ENCODE measurements at regions of chr11 and their contacts with region 1.

Region 1: DNA sequence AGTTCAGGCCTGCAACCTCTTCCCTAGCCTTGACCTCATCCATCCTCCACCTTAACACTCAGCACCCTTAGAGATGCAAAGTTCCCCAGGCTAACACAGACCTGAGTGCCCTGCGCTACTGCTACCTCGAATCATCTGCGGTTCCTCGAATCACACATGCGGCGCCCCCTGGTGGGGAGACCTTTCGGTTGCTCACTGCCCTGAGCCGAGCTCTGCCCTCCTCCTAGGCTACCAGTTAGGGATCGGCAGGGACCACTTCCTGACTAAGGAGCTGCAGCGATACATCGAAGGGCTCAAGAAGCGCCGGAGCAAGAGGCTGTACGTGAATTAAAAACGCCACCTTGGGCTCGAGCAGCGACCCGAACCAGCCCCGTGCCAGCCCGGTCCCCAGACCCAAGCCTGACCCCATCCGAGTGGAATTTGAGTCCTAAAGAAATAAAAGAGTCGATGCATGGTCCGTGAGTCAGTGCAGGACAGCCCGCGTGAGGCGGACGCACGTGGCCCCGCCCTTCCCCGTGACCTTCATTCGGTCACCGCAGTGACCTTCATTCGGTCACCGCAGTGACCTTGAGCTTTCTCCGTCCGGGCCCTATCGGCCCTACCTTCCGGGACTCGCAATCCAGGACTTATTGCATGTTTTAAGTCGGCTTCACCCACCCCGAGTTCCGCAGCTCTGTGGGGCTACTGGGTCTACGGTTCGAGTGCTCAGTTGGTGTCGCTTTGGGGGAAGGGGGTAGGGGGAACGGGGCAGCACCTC is 830 bp upstream of the ESRRA start:
- DNase-seq: peak; percentile 79 to 95 (median 90)
- ATAC-seq: peak; percentile 40
- H3K4me3 ChIP-seq: peak overlapping the region; percentile 97
- H3K4me3 Mint-ChIP-seq: peak overlapping the region; percentile 89 to 98 (median 94)
- H3K27ac ChIP-seq: peak overlapping the region; percentile 91
- H3K27ac Mint-ChIP-seq: peak overlapping the region; percentile 81 to 98 (median 95)
- H3K4me1 ChIP-seq: peaks cover 28 to 32% of the 10 kb centered on the region in 2 donors
- H3K4me1 Mint-ChIP-seq: peaks cover 25 to 43% (median 34%) of the 10 kb centered on the region in 7 donors
- H3K27me3 ChIP-seq: peaks cover 0 to 13% of the 10 kb centered on the region in 2 donors
- H3K27me3 Mint-ChIP-seq: peaks cover 13 to 29% (median 16%) of the 10 kb centered on the region in 5 donors

Region 2: GRCh38 chr11:64185816-64186498 is 118.5 kb before region 1 on chr11 and contains the start of gene STIP1:
- CTCF ChIA-PET with region 1: interaction called, 8 read pairs
- POLR2A ChIA-PET with region 1: interaction called, 15 read pairs
- intact Hi-C with region 1: loop called (anchors 1 kb)
- DNase-seq: peak; percentile 87 to 100 (median 99)
- ATAC-seq: peak; percentile 92
- H3K4me3 ChIP-seq: peak within 1 kb of the TSS; percentile 84
- H3K4me3 Mint-ChIP-seq: peak within 1 kb of the TSS in 9 of 10 donors; percentile 88 to 99 (median 96)
- H3K27ac ChIP-seq: peak within 1 kb of the TSS; percentile 82
- H3K27ac Mint-ChIP-seq: peak within 1 kb of the TSS in 7 of 9 donors; percentile 89 to 99 (median 92)
- H3K4me1 ChIP-seq: peaks cover 11 to 28% of the 10 kb centered on the region in 2 donors
- H3K4me1 Mint-ChIP-seq: peaks cover 19 to 58% (median 46%) of the 10 kb centered on the region in 7 donors
- H3K27me3 ChIP-seq: no peaks in the 10 kb centered on the region
- H3K27me3 Mint-ChIP-seq: peaks cover 0 to 6% (median 0%) of the 10 kb centered on the region in 5 donors
- total RNA-seq, gene STIP1: 45.1 to 243 (median 88.8) TPM

Region 3: DNA sequence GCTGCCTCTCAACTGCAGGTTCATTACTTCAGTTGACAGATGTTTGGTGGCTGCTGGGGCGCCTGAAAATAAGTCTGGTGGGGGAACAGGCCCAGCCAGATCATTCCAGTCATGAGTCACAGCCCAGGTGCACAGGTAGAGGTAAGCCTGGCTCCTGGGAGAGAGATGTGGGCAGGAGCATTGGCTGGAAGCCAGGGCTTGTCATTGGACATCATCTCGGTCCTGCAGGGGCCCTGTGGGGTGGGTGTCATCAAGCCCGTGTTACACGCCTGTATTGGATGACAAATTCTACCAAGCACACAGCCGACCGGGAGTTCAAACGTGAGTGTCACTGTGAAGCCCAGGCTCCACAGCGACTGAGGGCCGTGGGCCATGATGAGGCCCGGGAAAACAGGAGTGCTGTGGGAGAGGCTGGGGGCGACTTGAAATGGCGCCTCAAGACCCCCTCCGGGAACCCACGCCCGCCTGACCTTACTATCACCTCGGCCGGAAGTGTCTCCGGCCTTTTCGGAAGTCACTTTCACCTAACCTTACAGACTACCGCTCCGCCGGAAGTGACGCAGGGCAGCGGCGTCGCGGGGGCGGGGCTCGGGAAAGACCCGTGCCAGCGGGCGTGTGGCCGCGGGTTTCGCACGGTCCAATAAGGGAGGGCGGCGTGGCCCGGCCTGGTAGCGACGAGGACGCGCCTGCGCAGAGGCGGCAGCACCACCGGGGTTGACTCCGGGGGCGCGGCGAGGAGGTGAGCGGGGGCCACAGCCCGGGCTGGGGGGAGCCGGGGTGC is 63.9 kb before region 1 on chr11 and contains the start of gene FKBP2:
- CTCF ChIA-PET with region 1: interaction called, 7 read pairs
- POLR2A ChIA-PET with region 1: interaction called, 9 read pairs
- intact Hi-C with region 1: loop called (anchors 1 kb)
- DNase-seq: peak; percentile 97 to 99 (median 98)
- ATAC-seq: peak; percentile 78
- H3K4me3 ChIP-seq: peak within 1 kb of the TSS; percentile 73
- H3K4me3 Mint-ChIP-seq: peak within 1 kb of the TSS; percentile 80 to 95 (median 89)
- H3K27ac ChIP-seq: peak within 1 kb of the TSS; percentile 99
- H3K27ac Mint-ChIP-seq: peak within 1 kb of the TSS; percentile 97 to 100 (median 99)
- H3K4me1 ChIP-seq: peaks cover 24 to 28% of the 10 kb centered on the region in 2 donors
- H3K4me1 Mint-ChIP-seq: peaks cover 9 to 46% (median 31%) of the 10 kb centered on the region in 7 donors
- H3K27me3 ChIP-seq: no peaks in the 10 kb centered on the region
- H3K27me3 Mint-ChIP-seq: no peaks in the 10 kb centered on the region
- total RNA-seq, gene FKBP2: 20.3 to 46.6 (median 33.5) TPM

Region 4: GRCh38 chr11:64284048-64284961 is 20.2 kb before region 1 on chr11 and contains the start of gene BAD:
- CTCF ChIA-PET with region 1: interaction called, 9 read pairs
- POLR2A ChIA-PET with region 1: interaction called, 6 read pairs
- intact Hi-C with region 1: loop called (anchors 1 kb)
- DNase-seq: peak; percentile 77 to 92 (median 87)
- ATAC-seq: peak; percentile 87
- H3K4me3 ChIP-seq: peak within 1 kb of the TSS; percentile 100
- H3K4me3 Mint-ChIP-seq: peak within 1 kb of the TSS; percentile 84 to 93 (median 89)
- H3K27ac ChIP-seq: peak within 1 kb of the TSS; percentile 99
- H3K27ac Mint-ChIP-seq: peak within 1 kb of the TSS; percentile 81 to 98 (median 95)
- H3K4me1 ChIP-seq: peaks cover 11 to 17% of the 10 kb centered on the region in 2 donors
- H3K4me1 Mint-ChIP-seq: peaks cover 8 to 25% (median 18%) of the 10 kb centered on the region in 7 donors
- H3K27me3 ChIP-seq: no peaks in the 10 kb centered on the region
- H3K27me3 Mint-ChIP-seq: no peaks in the 10 kb centered on the region
- total RNA-seq, gene BAD: 17.5 to 41.1 (median 22.7) TPM

Region 5: GRCh38 chr11:64358907-64359711 is 54.6 kb after region 1 on chr11 and contains the start of gene RPS6KA4:
- CTCF ChIA-PET with region 1: interaction called, 3 read pairs
- POLR2A ChIA-PET with region 1: interaction called, 4 read pairs
- intact Hi-C with region 1: loop called in 1 of 2 experiments (anchors 1 kb)
- DNase-seq: peak in 7 of 9 donors; percentile 25 to 79 (median 36)
- ATAC-seq: peak; percentile 80
- H3K4me3 ChIP-seq: peak within 1 kb of the TSS; percentile 60
- H3K4me3 Mint-ChIP-seq: peak within 1 kb of the TSS; percentile 83 to 100 (median 91)
- H3K27ac ChIP-seq: peak within 1 kb of the TSS; percentile 68
- H3K27ac Mint-ChIP-seq: peak within 1 kb of the TSS; percentile 56 to 94 (median 72)
- H3K4me1 ChIP-seq: peaks cover 10 to 16% of the 10 kb centered on the region in 2 donors
- H3K4me1 Mint-ChIP-seq: peaks cover 16 to 40% (median 30%) of the 10 kb centered on the region in 7 donors
- H3K27me3 ChIP-seq: no peaks in the 10 kb centered on the region
- H3K27me3 Mint-ChIP-seq: no peaks in the 10 kb centered on the region
- total RNA-seq, gene RPS6KA4: 14.2 to 35.7 (median 27.9) TPM